Activated naive CD4-positive, alpha-beta T cell treated with anti-CD3 and anti-CD28 coated beads for 36 hours (primary cell): ENCODE measurements at regions of chr2 and their contacts with region 1.

Region 1: GRCh38 chr2:205494537-205495235 is 187.6 kb upstream of the NRP2 start:
- DNase-seq: no peak
- H3K4me3 Mint-ChIP-seq: no peak overlapping the region
- H3K27ac Mint-ChIP-seq: no peak overlapping the region
- H3K4me1 Mint-ChIP-seq: peaks cover 1% of the 10 kb centered on the region
- H3K27me3 Mint-ChIP-seq: no peaks in the 10 kb centered on the region

Region 2: DNA sequence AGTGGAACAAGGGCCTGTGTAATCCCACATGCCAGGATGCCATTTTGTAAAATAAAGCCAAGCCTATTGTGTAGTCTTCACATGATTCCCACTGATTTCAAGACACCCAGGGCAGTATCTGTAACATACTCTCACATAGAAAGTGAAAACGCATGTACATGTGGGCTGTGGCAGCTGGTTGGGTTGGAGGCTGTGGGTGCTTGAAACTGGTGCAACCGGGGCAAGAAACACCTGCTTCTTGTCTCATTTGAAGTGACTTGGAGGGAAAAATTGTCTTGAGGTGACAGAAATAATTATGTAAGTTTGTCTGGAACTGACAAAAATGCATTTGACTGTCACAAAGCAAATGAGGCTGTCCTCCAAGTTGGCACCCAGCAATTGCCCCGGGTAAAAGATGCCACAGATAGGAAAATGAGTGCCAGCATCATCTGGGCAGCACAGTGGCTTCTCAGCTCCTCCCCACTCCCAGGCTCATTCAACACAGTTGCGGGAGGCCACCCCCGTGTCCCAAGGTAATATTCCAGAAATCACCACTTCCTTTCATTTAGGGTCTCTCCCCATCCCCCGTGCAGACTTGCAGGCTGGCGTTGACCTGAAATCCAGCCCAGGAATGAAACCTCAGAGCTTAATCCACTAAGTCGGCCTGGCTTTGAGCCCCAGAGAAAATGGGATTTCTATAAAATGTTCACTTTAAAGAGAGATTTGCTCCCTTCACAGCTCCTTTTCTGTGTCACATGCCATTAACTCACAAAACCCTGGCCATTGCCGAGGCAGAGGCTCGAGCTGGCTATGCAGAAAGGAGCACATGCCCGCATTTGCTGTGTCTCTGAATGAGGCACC is 1243.3 kb before region 1 on chr2:
- CTCF ChIA-PET with region 1: no interaction called
- intact Hi-C with region 1: loop called (anchors 5 kb)
- DNase-seq: peak; percentile 47
- H3K4me3 Mint-ChIP-seq: no peak overlapping the region
- H3K27ac Mint-ChIP-seq: no peak overlapping the region
- H3K4me1 Mint-ChIP-seq: peaks cover 1% of the 10 kb centered on the region
- H3K27me3 Mint-ChIP-seq: peaks cover 3% of the 10 kb centered on the region

Region 3: GRCh38 chr2:205311201-205311600 is 183.5 kb before region 1 on chr2:
- CTCF ChIA-PET with region 1: no interaction called
- intact Hi-C with region 1: no loop called
- DNase-seq: no peak
- H3K4me3 Mint-ChIP-seq: no peak overlapping the region
- H3K27ac Mint-ChIP-seq: no peak overlapping the region
- H3K4me1 Mint-ChIP-seq: peaks cover 3% of the 10 kb centered on the region
- H3K27me3 Mint-ChIP-seq: no peaks in the 10 kb centered on the region